ENCODE measurements at regions of chr1 and their contacts with region 1.

Region 1: GRCh38 chr1:236103646-236104218 is 38.6 kb upstream of the GPR137B start:
- DNase-seq: peak; percentile 29
- H3K4me3 ChIP-seq: no peak overlapping the region
- H3K27ac ChIP-seq: no peak overlapping the region
- H3K4me1 ChIP-seq: no peaks in the 10 kb centered on the region
- H3K27me3 ChIP-seq: no peaks in the 10 kb centered on the region
- CTCF ChIP-seq: peak; percentile 71 to 79

Region 2: DNA sequence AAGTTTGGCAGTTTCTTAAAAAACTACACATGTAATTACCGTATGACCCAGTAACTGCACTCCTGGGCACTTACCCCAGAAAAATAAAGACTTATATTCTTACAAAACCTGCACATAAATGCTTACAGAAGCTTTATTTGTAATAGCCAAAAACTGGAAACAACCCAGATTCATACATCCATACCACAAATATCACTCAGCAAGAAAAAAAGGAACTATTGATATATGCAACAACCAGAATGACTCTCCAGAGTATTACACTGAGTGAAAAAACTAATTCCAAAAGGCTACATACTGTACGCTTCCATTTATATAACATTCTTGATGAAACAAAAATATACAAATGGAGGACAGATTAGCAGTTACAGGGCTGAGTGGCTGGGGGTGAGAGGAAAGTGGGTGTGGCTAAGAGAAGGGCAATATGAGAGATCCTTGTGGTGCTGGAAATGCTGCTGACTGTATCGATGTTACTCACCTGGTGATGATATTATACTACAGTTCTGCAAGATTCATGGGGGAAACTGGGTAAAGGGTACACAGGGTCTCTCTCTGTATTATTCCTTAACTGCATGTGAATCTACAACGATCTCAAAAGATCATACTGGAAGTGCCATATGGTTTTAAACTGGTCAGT is 358.1 kb before region 1 on chr1:
- CTCF ChIA-PET with region 1: no interaction called
- dilution Hi-C with region 1: no loop called
- in situ Hi-C with region 1: no loop called
- intact Hi-C with region 1: no loop called
- DNase-seq: no peak
- H3K4me3 ChIP-seq: no peak overlapping the region
- H3K27ac ChIP-seq: no peak overlapping the region
- H3K4me1 ChIP-seq: peaks cover 11% of the 10 kb centered on the region
- H3K27me3 ChIP-seq: no peaks in the 10 kb centered on the region
- CTCF ChIP-seq: no peak

Region 3: GRCh38 chr1:236018885-236019453 is 84.8 kb before region 1 on chr1:
- CTCF ChIA-PET with region 1: no interaction called
- dilution Hi-C with region 1: no loop called
- in situ Hi-C with region 1: no loop called
- intact Hi-C with region 1: no loop called
- DNase-seq: no peak
- H3K4me3 ChIP-seq: no peak overlapping the region
- H3K27ac ChIP-seq: no peak overlapping the region
- H3K4me1 ChIP-seq: peaks cover 22% of the 10 kb centered on the region
- H3K27me3 ChIP-seq: no peaks in the 10 kb centered on the region
- CTCF ChIP-seq: no peak

Region 4: DNA sequence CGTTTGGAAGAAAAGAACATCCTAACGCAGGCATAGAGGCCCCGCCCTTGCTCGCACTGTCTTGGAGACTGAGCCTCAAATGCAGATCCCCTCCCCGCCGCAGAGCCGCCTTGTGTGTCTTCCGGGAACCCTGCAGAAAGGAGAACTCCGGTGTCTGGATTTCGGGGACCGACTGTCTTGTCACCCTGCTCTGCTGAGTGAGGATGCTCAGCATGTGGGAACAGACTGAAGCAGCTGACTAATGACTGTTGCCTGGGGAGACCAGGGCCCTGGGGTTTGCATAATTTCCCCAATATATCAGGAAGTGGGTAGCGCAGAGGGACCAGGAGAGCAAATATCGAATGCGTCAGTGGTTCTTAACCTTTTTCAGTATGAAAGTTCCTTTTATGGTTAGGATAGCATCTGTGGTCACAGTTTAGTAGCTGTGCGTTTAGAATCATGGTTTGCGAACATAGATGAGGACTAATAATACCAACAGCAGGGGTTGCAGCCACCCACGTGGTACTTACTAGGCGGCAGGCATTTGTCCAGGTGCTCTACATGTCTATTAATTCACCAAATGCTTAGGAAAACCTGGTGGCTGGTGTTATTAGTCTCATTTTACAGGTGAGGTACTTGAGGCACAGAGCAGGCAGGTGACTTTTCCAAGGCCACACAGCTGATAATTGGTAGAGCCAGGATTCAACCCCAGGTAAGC is 52.9 kb after region 1 on chr1:
- CTCF ChIA-PET with region 1: no interaction called
- dilution Hi-C with region 1: no loop called
- in situ Hi-C with region 1: no loop called
- intact Hi-C with region 1: no loop called
- DNase-seq: no peak
- H3K4me3 ChIP-seq: no peak overlapping the region
- H3K27ac ChIP-seq: no peak overlapping the region
- H3K4me1 ChIP-seq: no peaks in the 10 kb centered on the region
- H3K27me3 ChIP-seq: peaks cover 1% of the 10 kb centered on the region
- CTCF ChIP-seq: no peak

Region 5: GRCh38 chr1:236523701-236524141 is 420.0 kb after region 1 on chr1 and contains the start of gene LGALS8:
- CTCF ChIA-PET with region 1: no interaction called
- dilution Hi-C with region 1: no loop called
- in situ Hi-C with region 1: loop called in 1 of 2 experiments (anchors 10 kb)
- intact Hi-C with region 1: no loop called
- DNase-seq: peak; percentile 78
- H3K4me3 ChIP-seq: peak within 1 kb of the TSS; percentile 71 to 86 (median 74)
- H3K27ac ChIP-seq: peak within 1 kb of the TSS; percentile 82
- H3K4me1 ChIP-seq: no peaks in the 10 kb centered on the region
- H3K27me3 ChIP-seq: no peaks in the 10 kb centered on the region
- CTCF ChIP-seq: no peak
- total RNA-seq, gene LGALS8: 41.7 to 96.9 TPM

Region 6: GRCh38 chr1:236795035-236795756 is 691.5 kb after region 1 on chr1 and contains the start of gene MTR:
- CTCF ChIA-PET with region 1: no interaction called
- dilution Hi-C with region 1: no loop called
- in situ Hi-C with region 1: no loop called
- intact Hi-C with region 1: loop called (anchors 10 kb)
- DNase-seq: peak; percentile 97
- H3K4me3 ChIP-seq: peak within 1 kb of the TSS; percentile 83 to 98 (median 95)
- H3K27ac ChIP-seq: peak within 1 kb of the TSS; percentile 78
- H3K4me1 ChIP-seq: peaks cover 5% of the 10 kb centered on the region
- H3K27me3 ChIP-seq: no peaks in the 10 kb centered on the region
- CTCF ChIP-seq: no peak
- total RNA-seq, gene MTR: 36.7 to 39.8 TPM

Region 7: DNA sequence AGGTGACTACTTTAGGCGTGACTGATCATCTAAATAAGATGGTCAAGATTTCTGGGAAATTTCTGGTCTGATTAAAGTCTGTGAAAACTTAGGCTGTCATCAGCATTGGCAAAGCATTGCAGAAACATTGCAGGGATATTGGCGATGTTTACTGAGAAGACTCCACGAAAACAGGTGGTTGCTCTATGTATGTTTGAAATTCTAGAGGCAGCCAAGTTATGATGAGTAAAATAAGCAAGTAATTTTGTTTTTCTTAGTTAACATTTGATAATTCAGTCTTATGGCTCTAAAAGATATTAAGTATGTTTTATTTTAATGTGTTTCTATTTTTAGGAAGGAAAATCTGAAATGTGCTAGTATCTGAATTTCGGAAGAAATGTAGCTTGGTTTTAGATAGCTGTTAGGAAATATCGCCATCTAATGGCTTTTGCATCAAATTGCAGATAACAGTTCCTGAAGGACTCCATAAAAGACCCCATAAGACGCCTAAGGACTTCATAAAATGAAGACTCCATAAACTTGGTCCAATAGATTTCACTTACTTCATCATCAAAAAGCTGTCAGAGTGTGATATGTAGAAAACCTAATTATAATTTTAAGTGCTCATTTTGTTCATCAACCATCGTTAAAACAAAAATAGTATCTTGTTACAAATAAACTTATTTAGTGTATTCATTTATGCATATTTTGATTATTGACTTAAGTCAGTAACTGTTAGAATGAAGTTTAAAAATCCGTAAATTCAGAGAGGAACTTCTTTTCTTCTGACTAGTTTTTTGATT is 1282.8 kb after region 1 on chr1:
- CTCF ChIA-PET with region 1: no interaction called
- dilution Hi-C with region 1: no loop called
- in situ Hi-C with region 1: loop called in 1 of 2 experiments (anchors 25 kb)
- intact Hi-C with region 1: loop called (anchors 10 kb)
- DNase-seq: no peak
- H3K4me3 ChIP-seq: no peak overlapping the region
- H3K27ac ChIP-seq: no peak overlapping the region
- H3K4me1 ChIP-seq: no peaks in the 10 kb centered on the region
- H3K27me3 ChIP-seq: no peaks in the 10 kb centered on the region
- CTCF ChIP-seq: peak; percentile 65 to 73